ENCODE measurements at regions of chr3 and their contacts with region 1.

Region 1: GRCh38 chr3:71269906-71270305 is 313.6 kb downstream of the FOXP1 start:
- DNase-seq: no peak
- ATAC-seq: no peak
- H3K4me3 ChIP-seq: no peak overlapping the region
- H3K27ac ChIP-seq: no peak overlapping the region
- H3K4me1 ChIP-seq: peaks cover 10% of the 10 kb centered on the region
- CTCF ChIP-seq: no peak
- EP300 ChIP-seq: no peak
- POLR2A ChIP-seq: no peak
- RAD21 ChIP-seq: no peak

Region 2: DNA sequence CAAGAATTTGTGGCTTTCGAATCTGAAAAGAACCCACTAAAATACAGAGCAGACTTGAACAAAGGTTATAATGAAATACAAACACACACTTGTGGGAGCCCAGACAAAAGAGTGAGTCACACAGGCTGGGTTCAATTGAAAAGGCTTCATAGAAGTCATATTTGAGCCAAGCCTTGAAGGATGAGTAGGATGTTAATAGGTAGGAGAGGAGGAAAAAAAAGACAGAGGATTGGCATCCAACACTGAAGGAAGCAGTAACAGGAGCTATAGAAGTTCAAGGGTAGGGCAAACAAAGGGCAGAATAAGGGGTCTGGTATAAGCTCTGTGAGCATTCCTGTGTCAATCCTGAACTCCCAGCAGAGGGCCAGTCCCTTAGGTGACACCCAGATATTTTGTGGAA is 11.8 kb before region 1 on chr3:
- CTCF ChIA-PET with region 1: interaction called, 5 read pairs
- POLR2A ChIA-PET with region 1: interaction called, 12 read pairs
- DNase-seq: peak; percentile 43 to 89
- ATAC-seq: peak; percentile 79 to 84
- H3K4me3 ChIP-seq: no peak overlapping the region
- H3K27ac ChIP-seq: peak overlapping the region; percentile 78 to 91
- H3K4me1 ChIP-seq: peaks cover 90% of the 10 kb centered on the region
- CTCF ChIP-seq: no peak
- EP300 ChIP-seq: peak; percentile 24 to 57; a peak in 2 of 5 replicates
- POLR2A ChIP-seq: no peak
- RAD21 ChIP-seq: no peak; a peak in 1 of 5 replicates

Region 3: GRCh38 chr3:71299160-71299559 is 29.3 kb after region 1 on chr3:
- CTCF ChIA-PET with region 1: no interaction called
- POLR2A ChIA-PET with region 1: no interaction called
- DNase-seq: no peak
- ATAC-seq: no peak
- H3K4me3 ChIP-seq: no peak overlapping the region
- H3K27ac ChIP-seq: no peak overlapping the region
- H3K4me1 ChIP-seq: peaks cover under 1% of the 10 kb centered on the region; the same call in 1 of the 3 replicates
- CTCF ChIP-seq: no peak
- EP300 ChIP-seq: no peak
- POLR2A ChIP-seq: no peak
- RAD21 ChIP-seq: no peak

Measured in A549 (cell line).